ENCODE measurements at regions of chr1 and their contacts with region 1.

Region 1: DNA sequence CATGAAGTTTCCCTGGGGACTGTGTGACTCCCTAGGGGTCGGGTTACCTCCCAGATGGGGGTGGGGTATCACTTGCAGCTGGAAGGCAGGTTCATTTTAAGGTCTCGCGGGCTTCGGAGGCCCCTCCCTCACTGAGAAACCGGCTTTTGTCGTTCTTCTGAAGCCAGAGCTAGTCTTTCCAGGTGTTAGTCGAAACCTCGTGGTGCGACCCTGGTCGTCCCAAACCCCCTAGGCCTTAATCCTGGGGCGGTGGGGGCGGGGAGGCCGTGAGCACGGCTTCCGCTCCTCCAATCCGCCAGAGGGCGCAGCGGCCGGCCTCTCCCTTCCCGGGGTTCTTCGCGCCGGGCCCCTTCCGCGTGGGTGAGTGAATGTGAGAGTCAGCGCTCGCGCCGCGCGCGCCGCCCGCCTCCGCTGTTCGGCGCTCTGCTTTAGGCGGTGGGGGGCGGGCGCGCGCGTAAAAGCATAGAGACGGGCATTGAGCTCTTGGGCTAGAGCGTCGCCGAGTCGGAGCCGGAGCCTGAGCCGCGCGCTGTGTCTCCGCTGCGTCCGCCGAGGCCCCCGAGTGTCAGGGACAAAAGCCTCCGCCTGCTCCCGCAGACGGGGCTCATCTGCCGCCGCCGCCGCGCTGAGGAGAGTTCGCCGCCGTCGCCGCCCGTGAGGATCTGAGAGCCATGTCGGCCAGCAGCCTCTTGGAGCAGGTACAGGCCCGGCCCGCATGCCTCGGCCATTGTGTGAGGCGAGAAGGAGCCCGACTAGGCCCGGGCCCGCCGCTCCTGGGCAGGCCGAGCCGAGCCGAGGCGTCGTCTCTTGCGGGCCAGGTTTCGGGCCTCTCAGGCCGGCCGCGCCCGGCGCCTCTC is at the start of gene YTHDF2:
- DNase-seq: peak; percentile 96
- H3K4me3 Mint-ChIP-seq: peak within 1 kb of the TSS; percentile 96
- H3K27ac Mint-ChIP-seq: peak within 1 kb of the TSS; percentile 93
- H3K4me1 Mint-ChIP-seq: peaks cover 27% of the 10 kb centered on the region
- H3K27me3 Mint-ChIP-seq: no peaks in the 10 kb centered on the region
- total RNA-seq, gene YTHDF2: 91.7 and 94.9 TPM in 2 replicates

Region 2: GRCh38 chr1:28648474-28649198 is 88.0 kb before region 1 on chr1 and contains the start of gene RNU11:
- intact Hi-C with region 1: loop called (anchors 1 kb)
- DNase-seq: peak; percentile 86
- H3K4me3 Mint-ChIP-seq: peak within 1 kb of the TSS; percentile 92
- H3K27ac Mint-ChIP-seq: peak within 1 kb of the TSS; percentile 100
- H3K4me1 Mint-ChIP-seq: peaks cover 31% of the 10 kb centered on the region
- H3K27me3 Mint-ChIP-seq: peaks cover 2% of the 10 kb centered on the region
- total RNA-seq, gene RNU11: not detected in 2 replicates

Region 3: GRCh38 chr1:28668191-28668955 is 68.3 kb before region 1 on chr1 and contains the start of gene GMEB1:
- intact Hi-C with region 1: loop called (anchors 1 kb)
- DNase-seq: peak; percentile 87
- H3K4me3 Mint-ChIP-seq: peak within 1 kb of the TSS; percentile 90
- H3K27ac Mint-ChIP-seq: peak within 1 kb of the TSS; percentile 98
- H3K4me1 Mint-ChIP-seq: peaks cover 11% of the 10 kb centered on the region
- H3K27me3 Mint-ChIP-seq: no peaks in the 10 kb centered on the region
- total RNA-seq, gene GMEB1: 27.2 and 30.3 TPM in 2 replicates

Region 4: DNA sequence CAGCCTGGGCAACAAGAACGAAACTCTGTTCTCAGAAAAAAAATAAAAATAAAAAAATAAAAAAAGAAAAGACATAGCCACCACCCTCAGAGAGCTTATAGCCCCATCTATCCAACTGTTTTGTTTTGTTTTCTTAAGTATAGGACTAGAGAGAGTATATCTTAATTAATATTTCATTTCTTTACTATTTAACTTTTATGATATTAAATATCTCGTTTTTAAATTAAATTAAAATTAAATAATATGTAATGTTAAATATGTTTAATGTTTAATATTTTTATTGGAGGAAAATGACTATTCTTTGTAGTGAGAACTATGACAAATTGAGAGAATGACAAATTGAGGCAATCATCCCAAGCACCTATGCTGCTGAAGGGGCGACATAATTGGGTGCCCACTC is 33.0 kb before region 1 on chr1:
- intact Hi-C with region 1: no loop called
- DNase-seq: no peak
- H3K4me3 Mint-ChIP-seq: no peak overlapping the region
- H3K27ac Mint-ChIP-seq: no peak overlapping the region
- H3K4me1 Mint-ChIP-seq: peaks cover 9% of the 10 kb centered on the region
- H3K27me3 Mint-ChIP-seq: no peaks in the 10 kb centered on the region

Region 5: GRCh38 chr1:28775121-28775944 is 38.7 kb after region 1 on chr1:
- intact Hi-C with region 1: loop called (anchors 1 kb)
- DNase-seq: peak; percentile 61
- H3K4me3 Mint-ChIP-seq: peak overlapping the region; percentile 49
- H3K27ac Mint-ChIP-seq: no peak overlapping the region
- H3K4me1 Mint-ChIP-seq: peaks cover 9% of the 10 kb centered on the region
- H3K27me3 Mint-ChIP-seq: peaks cover 2% of the 10 kb centered on the region

Region 6: DNA sequence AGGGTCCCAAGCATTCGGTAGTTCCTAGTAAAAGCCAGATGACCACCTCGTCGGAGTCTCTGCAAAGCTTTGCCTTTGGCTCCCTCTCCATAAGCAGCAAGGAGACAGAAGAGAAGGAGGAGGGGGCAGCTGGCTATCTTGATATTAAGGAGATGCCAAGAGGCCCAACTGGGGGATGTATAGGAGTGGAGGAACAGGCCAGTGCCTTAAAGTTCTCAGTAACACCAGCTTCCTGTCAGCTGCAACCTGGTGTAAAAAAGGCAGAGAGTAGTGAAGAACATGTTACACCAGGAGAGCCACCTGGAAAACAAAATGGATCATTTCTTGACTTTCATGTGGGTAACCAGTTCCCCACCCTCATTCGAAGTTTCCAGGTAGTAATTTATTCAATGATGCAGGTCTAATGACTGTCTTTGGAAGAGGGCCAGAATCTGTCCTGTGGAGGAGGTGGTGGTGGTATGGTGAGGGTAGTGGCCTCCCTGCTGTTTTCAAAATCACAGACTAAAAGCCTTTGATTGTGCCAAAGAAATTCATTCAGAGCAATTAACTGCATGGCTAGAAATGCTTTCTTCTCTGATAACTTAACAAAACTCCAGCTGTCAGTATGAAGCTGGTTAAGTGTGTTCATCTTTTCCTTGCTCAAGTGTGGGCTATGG is 359.7 kb after region 1 on chr1:
- intact Hi-C with region 1: no loop called
- DNase-seq: no peak
- H3K4me3 Mint-ChIP-seq: no peak overlapping the region
- H3K27ac Mint-ChIP-seq: no peak overlapping the region
- H3K4me1 Mint-ChIP-seq: peaks cover 6% of the 10 kb centered on the region
- H3K27me3 Mint-ChIP-seq: no peaks in the 10 kb centered on the region